ENCODE measurements at regions of chr6 and their contacts with region 1.

Region 1: DNA sequence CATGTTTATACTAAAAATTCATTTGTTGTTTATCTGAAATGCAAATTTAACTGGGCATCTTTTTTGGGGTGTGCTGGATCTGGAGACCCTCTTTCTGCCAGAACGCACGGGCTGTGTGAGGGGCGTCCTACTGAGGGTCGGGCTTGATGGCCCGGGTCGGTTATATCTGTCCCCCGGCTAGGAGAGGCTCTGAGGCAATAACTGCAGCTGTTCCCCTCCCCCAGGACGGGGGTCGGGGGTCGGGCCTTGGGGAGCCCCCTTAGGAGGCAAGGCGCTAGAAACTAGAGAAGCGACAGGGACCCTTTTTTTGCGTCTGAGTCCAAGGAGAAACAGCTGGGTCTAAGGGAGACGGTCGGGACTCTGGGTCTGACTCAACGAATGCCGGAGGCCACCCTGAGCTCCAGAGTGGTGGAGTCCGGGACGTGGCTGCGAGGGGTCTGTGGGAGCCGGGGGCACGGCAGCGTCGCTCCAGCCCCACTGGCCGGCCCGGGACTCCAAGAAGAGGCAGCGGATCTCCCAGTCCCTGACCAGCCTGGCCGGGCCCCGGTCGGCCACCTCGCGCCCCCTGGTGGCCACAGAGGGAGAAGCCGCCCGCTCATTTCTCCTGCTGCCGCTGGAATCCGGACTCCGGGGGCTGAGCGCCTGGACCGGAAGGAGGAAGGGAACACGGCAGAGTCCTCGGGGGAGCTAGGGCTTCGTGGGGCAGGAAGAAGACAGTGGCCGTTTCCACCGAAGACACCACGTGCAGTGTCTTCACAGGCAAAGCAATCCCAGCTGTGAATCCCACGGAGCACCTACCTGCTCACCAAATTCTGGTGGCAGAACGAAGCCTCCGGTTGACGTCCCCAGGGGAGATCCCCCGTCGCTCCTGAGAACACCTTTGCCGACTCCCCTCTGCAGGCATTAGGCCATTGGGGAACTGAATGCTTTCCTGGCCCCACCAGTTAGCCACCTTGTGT is 24.0 kb upstream of the SCML4 start:
- DNase-seq: peak; percentile 74
- H3K4me3 Mint-ChIP-seq: peak overlapping the region; percentile 69
- H3K27ac Mint-ChIP-seq: no peak overlapping the region
- H3K4me1 Mint-ChIP-seq: peaks cover 30% of the 10 kb centered on the region
- H3K27me3 Mint-ChIP-seq: peaks cover 15% of the 10 kb centered on the region

Region 2: DNA sequence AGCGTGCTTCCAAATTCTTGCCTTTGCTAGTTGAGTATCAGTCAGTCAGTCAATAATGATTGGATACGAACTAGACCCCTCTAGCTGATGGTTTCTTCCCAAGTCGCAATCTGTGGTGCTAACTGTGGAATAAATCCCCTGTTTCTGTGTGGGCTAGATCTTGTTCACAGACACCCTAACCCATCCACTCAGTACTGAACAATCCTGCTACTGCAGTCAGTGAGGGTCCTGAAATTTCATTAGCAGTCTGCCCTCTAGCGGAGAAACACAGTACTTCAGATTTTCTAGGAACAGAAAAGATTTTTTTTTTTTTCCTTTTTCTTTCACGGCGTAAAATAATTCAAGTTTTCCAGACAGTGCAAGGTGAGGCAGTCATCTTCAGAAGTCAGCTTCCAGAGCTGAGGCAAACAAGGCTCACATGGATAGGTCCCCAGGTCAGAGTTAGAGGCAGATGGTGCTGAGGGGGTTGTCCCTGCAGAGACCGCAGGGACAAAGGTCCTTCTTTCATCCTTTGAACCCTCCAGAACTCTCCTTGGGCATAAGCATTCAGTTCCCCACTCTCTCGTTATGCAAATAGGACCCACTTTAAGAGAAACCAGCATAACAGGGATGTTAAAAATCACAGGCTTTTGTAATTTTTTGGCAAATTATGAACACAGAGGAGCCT is 143.6 kb before region 1 on chr6:
- intact Hi-C with region 1: loop called (anchors 1 kb)
- DNase-seq: no peak
- H3K4me3 Mint-ChIP-seq: no peak overlapping the region
- H3K27ac Mint-ChIP-seq: no peak overlapping the region
- H3K4me1 Mint-ChIP-seq: peaks cover 15% of the 10 kb centered on the region
- H3K27me3 Mint-ChIP-seq: peaks cover 1% of the 10 kb centered on the region

Region 3: GRCh38 chr6:107731422-107732319 is 116.5 kb before region 1 on chr6:
- intact Hi-C with region 1: loop called (anchors 1 kb)
- DNase-seq: no peak
- H3K4me3 Mint-ChIP-seq: peak overlapping the region; percentile 75
- H3K27ac Mint-ChIP-seq: peak overlapping the region; percentile 21
- H3K4me1 Mint-ChIP-seq: peaks cover 78% of the 10 kb centered on the region
- H3K27me3 Mint-ChIP-seq: peaks cover 19% of the 10 kb centered on the region

Region 4: DNA sequence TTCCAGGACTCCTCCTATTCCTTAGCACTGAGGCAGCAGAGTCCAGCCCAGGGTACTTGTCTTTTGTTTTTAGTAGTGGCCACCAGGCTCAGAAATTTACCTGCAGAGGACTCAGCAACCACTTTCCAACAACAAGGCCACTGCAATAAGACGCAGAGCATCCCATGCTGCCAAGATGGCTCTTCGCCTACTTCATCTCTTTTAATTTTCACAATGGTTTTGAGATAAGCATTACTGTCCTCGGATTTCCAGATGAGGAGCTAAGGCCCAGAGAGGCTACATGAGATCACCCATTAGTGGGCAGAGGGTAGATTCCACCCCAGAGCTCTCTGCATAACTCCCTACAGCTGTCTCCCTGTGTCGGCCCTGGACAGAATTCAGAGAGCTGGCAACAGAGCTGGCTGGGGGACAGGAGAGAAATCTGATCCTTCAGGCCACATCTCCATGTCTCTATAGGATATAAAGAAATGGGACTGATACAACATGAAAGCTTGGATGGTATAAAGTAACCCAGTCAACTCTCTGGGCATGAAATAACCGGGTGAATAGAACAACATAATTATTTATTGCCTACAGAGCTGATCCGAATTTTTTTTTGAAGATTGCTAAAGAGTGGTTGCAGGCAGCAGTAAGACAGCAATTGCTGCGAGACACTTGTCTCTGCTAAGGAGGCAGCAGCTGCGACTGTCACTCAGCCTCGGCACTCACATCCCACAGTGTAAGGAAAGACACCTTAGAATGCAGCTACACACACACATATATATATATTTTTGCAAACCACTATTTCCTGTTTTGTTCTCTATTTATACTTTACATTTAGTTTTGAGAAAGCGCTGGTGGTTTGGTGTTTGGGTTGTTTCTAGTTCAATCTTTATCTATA is 61.2 kb before region 1 on chr6:
- intact Hi-C with region 1: loop called (anchors 5 kb)
- DNase-seq: peak; percentile 40
- H3K4me3 Mint-ChIP-seq: peak overlapping the region; percentile 71
- H3K27ac Mint-ChIP-seq: no peak overlapping the region
- H3K4me1 Mint-ChIP-seq: peaks cover 57% of the 10 kb centered on the region
- H3K27me3 Mint-ChIP-seq: peaks cover 8% of the 10 kb centered on the region

Region 5: DNA sequence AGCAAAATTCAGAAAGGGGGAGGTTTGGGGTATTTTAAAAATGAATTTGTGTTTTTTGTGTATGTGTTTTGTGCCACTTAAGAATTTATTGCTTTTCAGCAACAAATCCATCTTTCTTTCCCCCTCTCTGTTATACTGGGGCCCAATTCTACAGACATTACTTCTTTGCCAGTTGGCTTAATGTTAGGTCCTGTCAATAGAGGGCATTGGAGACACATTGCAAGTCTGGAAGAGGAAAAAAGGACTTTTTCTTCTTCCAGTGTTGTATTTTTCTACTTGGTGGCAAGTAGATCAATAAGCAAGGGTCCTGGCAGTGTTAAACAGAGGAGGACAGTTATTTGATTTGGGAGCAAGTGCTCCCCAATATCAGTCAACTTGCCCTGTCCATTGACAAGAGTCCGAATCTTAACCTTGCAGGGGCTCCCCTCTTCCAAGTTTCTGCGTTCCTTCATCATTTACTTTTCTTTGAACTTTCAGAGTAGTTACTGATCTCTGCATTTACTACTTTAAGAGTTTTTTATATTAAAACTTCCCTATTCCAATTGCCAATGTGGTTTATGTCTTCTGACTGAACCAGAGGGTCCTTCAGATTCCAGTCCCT is 47.5 kb before region 1 on chr6:
- intact Hi-C with region 1: loop called (anchors 1 kb)
- DNase-seq: no peak
- H3K4me3 Mint-ChIP-seq: no peak overlapping the region
- H3K27ac Mint-ChIP-seq: no peak overlapping the region
- H3K4me1 Mint-ChIP-seq: peaks cover 11% of the 10 kb centered on the region
- H3K27me3 Mint-ChIP-seq: peaks cover 13% of the 10 kb centered on the region

Region 6: GRCh38 chr6:108001696-108002231 is 153.6 kb after region 1 on chr6:
- intact Hi-C with region 1: no loop called
- DNase-seq: no peak
- H3K4me3 Mint-ChIP-seq: no peak overlapping the region
- H3K27ac Mint-ChIP-seq: no peak overlapping the region
- H3K4me1 Mint-ChIP-seq: no peaks in the 10 kb centered on the region
- H3K27me3 Mint-ChIP-seq: peaks cover 8% of the 10 kb centered on the region